T-cell (primary cell): ENCODE measurements at regions of chr21 and their contacts with region 1.

Region 1: DNA sequence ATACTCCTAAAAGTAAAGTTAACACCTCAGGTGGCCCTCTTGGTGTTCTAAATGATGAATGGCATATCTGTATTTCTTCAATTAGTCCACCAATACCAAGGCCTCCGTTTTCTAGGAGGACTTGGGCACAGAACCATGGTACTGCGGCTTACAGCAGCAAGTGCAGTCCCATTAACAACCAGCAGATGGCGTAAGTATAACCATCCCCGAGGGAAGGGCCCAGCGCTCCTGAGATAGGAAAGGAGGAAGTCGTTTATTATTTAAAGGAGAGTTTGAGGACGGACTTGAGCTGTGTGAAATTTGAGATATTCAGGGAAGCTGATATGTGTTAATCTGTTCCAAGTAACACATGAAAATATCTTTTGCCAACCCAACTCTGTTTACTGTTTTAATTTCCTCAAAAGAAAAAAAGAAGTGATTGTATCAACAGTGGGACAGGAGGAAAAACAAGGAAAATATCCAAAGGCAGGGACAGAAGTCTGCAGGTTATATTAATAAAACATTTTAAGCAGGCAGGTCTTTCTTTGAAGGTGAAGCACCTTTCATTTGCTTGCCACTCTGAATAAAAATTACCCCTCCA is 37.7 kb upstream of the KCNJ15 start:
- DNase-seq: peak in 34 of 35 experiments; percentile 19 to 80 (median 38)
- ATAC-seq: peak; percentile 50 to 59 (median 57)
- H3K4me3 ChIP-seq: no peak overlapping the region
- H3K4me3 Mint-ChIP-seq: no peak overlapping the region
- H3K27ac ChIP-seq: no peak overlapping the region
- H3K27ac Mint-ChIP-seq: no peak overlapping the region
- H3K4me1 ChIP-seq: no peaks in the 10 kb centered on the region
- H3K4me1 Mint-ChIP-seq: peaks cover 3 to 6% (median 3%) of the 10 kb centered on the region in 3 donors
- H3K27me3 ChIP-seq: peaks cover 0 to 6% of the 10 kb centered on the region in 2 experiments
- H3K27me3 Mint-ChIP-seq: no peaks in the 10 kb centered on the region

Region 2: DNA sequence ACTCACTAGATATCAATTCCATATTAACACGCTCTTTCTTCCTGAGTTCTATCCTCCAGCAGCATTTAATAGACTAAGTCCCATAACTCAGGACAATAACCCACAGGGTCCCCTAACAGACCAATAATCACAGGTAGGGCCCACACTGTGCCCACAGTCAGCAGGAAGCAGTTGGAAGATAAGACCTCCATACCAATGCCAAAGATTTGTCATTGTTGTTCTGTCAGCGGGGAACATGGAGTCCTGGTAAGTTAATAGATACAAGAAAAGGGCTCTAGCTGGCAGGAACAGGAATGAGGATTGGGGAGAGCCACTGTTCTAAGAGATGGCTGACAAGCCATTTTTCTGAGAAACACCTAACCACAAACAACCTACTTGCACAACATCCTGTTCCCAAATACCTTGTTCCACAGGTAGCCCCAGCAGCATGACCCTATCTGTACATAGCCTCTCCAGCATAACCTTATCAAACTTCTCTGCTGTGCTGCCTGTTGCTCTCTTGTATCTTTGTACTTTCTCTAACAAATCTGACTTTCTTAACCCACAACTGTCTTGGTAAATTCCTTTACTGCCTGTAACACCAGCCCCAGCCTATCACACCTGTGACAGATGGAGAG is 104.3 kb before region 1 on chr21:
- CTCF ChIA-PET with region 1: no interaction called
- POLR2A ChIA-PET with region 1: no interaction called
- DNase-seq: no peak
- ATAC-seq: no peak
- H3K4me3 ChIP-seq: no peak overlapping the region
- H3K4me3 Mint-ChIP-seq: no peak overlapping the region
- H3K27ac ChIP-seq: no peak overlapping the region
- H3K27ac Mint-ChIP-seq: no peak overlapping the region
- H3K4me1 ChIP-seq: no peaks in the 10 kb centered on the region
- H3K4me1 Mint-ChIP-seq: peaks cover 5 to 17% (median 8%) of the 10 kb centered on the region in 3 donors
- H3K27me3 ChIP-seq: peaks cover 0 to 3% of the 10 kb centered on the region in 2 experiments
- H3K27me3 Mint-ChIP-seq: peaks cover 0 to 9% of the 10 kb centered on the region in 2 donors

Region 3: DNA sequence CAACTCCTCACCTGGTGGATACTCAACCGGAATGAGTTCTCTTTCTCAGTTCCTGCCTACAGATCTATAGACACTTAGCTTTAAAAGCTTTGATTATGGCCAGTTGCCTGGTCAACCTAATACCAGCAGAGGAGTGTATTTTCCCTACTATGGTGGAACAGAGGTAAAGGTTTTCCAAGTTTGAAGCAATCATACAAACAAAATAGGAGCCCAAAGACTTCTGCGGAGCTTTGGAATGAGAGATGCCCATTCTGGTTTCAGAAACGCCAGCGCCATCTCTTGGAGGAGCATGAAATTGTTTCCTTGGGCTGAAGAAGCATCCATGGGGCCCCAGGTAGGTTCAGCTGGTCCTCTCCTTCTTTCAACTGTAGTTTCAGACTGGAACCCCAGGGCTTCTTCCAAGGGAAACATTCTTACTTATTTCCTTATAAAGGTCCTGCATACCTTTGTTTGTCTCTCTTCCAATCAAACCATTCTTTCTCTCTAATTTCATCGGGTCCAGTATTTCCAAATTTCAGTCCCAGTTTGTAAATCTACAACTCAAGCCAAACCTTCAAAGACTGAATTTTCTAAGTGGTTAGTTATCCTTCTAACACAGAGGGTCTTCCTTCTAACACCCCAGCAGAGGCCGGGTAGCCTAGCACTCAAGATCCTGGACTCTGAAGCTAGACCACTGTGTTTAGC is 133.5 kb after region 1 on chr21:
- CTCF ChIA-PET with region 1: interaction called, 8 to 15 read pairs
- POLR2A ChIA-PET with region 1: no interaction called
- DNase-seq: peak in 28 of 35 experiments; percentile 4 to 60 (median 32)
- ATAC-seq: peak in 1 of 4 experiments; percentile 57
- H3K4me3 ChIP-seq: no peak overlapping the region
- H3K4me3 Mint-ChIP-seq: peak overlapping the region in 1 of 3 donors; percentile 20
- H3K27ac ChIP-seq: no peak overlapping the region
- H3K27ac Mint-ChIP-seq: no peak overlapping the region
- H3K4me1 ChIP-seq: peaks cover 5% of the 10 kb centered on the region in 2 experiments
- H3K4me1 Mint-ChIP-seq: peaks cover 12 to 22% (median 13%) of the 10 kb centered on the region in 3 donors
- H3K27me3 ChIP-seq: peaks cover 0 to 24% of the 10 kb centered on the region in 2 experiments
- H3K27me3 Mint-ChIP-seq: peaks cover 0 to 10% of the 10 kb centered on the region in 2 donors